ENCODE measurements at regions of chr14 and their contacts with region 1.

Region 1: GRCh38 chr14:92585981-92586937 is 72.7 kb downstream of the RIN3 start:
- DNase-seq: peak in 8 of 9 donors; percentile 46 to 78 (median 66)
- ATAC-seq: peak; percentile 80
- H3K4me3 ChIP-seq: peak overlapping the region; percentile 33
- H3K4me3 Mint-ChIP-seq: peak overlapping the region; percentile 67 to 87 (median 76)
- H3K27ac ChIP-seq: peak overlapping the region; percentile 70
- H3K27ac Mint-ChIP-seq: peak overlapping the region; percentile 90 to 98 (median 95)
- H3K4me1 ChIP-seq: peaks cover 89 to 90% of the 10 kb centered on the region in 2 donors
- H3K4me1 Mint-ChIP-seq: peaks cover 63 to 100% (median 96%) of the 10 kb centered on the region in 7 donors
- H3K27me3 ChIP-seq: no peaks in the 10 kb centered on the region
- H3K27me3 Mint-ChIP-seq: peaks cover 0 to 18% (median 0%) of the 10 kb centered on the region in 5 donors

Region 2: GRCh38 chr14:92513204-92513973 is 72.9 kb before region 1 on chr14 and contains the start of gene RIN3:
- CTCF ChIA-PET with region 1: no interaction called
- POLR2A ChIA-PET with region 1: interaction called, 3 read pairs
- intact Hi-C with region 1: loop called in 1 of 2 experiments (anchors 5 kb)
- DNase-seq: peak in 8 of 9 donors; percentile 17 to 43 (median 38)
- ATAC-seq: peak; percentile 71
- H3K4me3 ChIP-seq: peak within 1 kb of the TSS; percentile 76
- H3K4me3 Mint-ChIP-seq: peak within 1 kb of the TSS; percentile 48 to 86 (median 76)
- H3K27ac ChIP-seq: peak within 1 kb of the TSS; percentile 67
- H3K27ac Mint-ChIP-seq: peak within 1 kb of the TSS in 8 of 9 donors; percentile 14 to 71 (median 56)
- H3K4me1 ChIP-seq: peaks cover 25 to 44% of the 10 kb centered on the region in 2 donors
- H3K4me1 Mint-ChIP-seq: peaks cover 21 to 48% (median 34%) of the 10 kb centered on the region in 7 donors
- H3K27me3 ChIP-seq: no peaks in the 10 kb centered on the region
- H3K27me3 Mint-ChIP-seq: peaks cover 0 to 62% (median 0%) of the 10 kb centered on the region in 5 donors
- total RNA-seq, gene RIN3: 45.4 to 182 (median 132) TPM

Region 3: GRCh38 chr14:92551044-92551841 is 35.0 kb before region 1 on chr14:
- CTCF ChIA-PET with region 1: interaction called, 4 read pairs
- POLR2A ChIA-PET with region 1: interaction called, 10 read pairs
- intact Hi-C with region 1: loop called (anchors 2 to 5 kb)
- DNase-seq: no peak
- ATAC-seq: peak; percentile 59
- H3K4me3 ChIP-seq: no peak overlapping the region
- H3K4me3 Mint-ChIP-seq: no peak overlapping the region
- H3K27ac ChIP-seq: no peak overlapping the region
- H3K27ac Mint-ChIP-seq: peak overlapping the region in 3 of 9 donors; percentile 1 to 51 (median 50)
- H3K4me1 ChIP-seq: peaks cover 19 to 20% of the 10 kb centered on the region in 2 donors
- H3K4me1 Mint-ChIP-seq: peaks cover 27 to 54% (median 41%) of the 10 kb centered on the region in 7 donors
- H3K27me3 ChIP-seq: no peaks in the 10 kb centered on the region
- H3K27me3 Mint-ChIP-seq: peaks cover 0 to 10% (median 0%) of the 10 kb centered on the region in 5 donors

Region 4: GRCh38 chr14:92563359-92563758 is 22.9 kb before region 1 on chr14:
- CTCF ChIA-PET with region 1: no interaction called
- POLR2A ChIA-PET with region 1: interaction called, 8 read pairs
- intact Hi-C with region 1: loop called (anchors 1 kb)
- DNase-seq: no peak
- ATAC-seq: peak; percentile 66
- H3K4me3 ChIP-seq: no peak overlapping the region
- H3K4me3 Mint-ChIP-seq: peak overlapping the region in 1 of 10 donors; percentile 10
- H3K27ac ChIP-seq: no peak overlapping the region
- H3K27ac Mint-ChIP-seq: peak overlapping the region in 2 of 9 donors; percentile 21 to 68
- H3K4me1 ChIP-seq: peaks cover 5 to 9% of the 10 kb centered on the region in 2 donors
- H3K4me1 Mint-ChIP-seq: peaks cover 15 to 64% (median 38%) of the 10 kb centered on the region in 7 donors
- H3K27me3 ChIP-seq: no peaks in the 10 kb centered on the region
- H3K27me3 Mint-ChIP-seq: no peaks in the 10 kb centered on the region

Region 5: DNA sequence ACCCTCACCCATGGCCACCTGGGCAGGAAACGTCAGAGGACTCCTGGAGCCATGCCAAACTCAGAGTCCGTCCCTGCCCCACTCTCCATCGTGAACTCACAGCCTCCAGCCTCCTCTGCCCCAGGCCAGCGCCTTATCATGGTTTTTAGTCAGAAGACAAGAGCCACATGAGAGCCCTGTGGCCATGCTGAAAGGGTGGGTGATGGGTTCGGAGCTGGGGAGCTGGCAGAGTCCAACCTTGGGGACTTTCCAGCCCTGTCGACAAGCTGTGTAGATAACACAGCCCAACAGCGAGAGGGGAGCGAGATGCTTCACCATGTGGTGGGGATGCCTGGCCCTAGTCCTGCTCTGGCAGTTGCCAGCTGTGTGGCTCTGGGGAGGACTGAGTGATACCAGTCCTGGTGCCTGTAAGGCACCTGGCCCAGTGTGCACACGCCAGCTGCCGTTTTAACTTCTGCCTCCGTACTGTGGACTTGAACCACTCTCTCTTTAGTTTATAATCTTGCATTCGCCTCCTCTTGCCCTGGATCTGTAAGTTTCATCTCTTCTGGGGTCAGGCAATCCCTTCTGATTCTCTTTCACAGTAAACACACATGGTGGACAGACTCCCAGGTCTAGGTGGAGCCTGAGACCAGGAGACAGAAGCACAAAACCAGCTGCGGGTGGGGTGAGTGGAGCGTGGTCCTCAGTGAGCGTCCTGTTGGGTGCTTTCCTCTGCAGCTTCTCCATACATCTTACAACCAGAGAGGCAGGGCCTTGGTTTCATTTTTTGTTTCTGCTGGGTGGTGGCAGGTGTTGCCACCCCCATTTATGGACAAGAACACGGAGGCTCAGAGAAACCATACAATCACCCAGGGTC is 17.4 kb before region 1 on chr14:
- CTCF ChIA-PET with region 1: no interaction called
- POLR2A ChIA-PET with region 1: interaction called, 6 read pairs
- intact Hi-C with region 1: loop called in 1 of 2 experiments (anchors 2 kb)
- DNase-seq: peak in 2 of 9 donors; percentile 27 to 40
- ATAC-seq: peak; percentile 85
- H3K4me3 ChIP-seq: peak overlapping the region; percentile 29
- H3K4me3 Mint-ChIP-seq: peak overlapping the region; percentile 46 to 91 (median 76)
- H3K27ac ChIP-seq: peak overlapping the region; percentile 42
- H3K27ac Mint-ChIP-seq: peak overlapping the region; percentile 75 to 99 (median 94)
- H3K4me1 ChIP-seq: peaks cover 13 to 32% of the 10 kb centered on the region in 2 donors
- H3K4me1 Mint-ChIP-seq: peaks cover 20 to 54% (median 45%) of the 10 kb centered on the region in 7 donors
- H3K27me3 ChIP-seq: no peaks in the 10 kb centered on the region
- H3K27me3 Mint-ChIP-seq: peaks cover 0 to 23% (median 0%) of the 10 kb centered on the region in 5 donors

Region 6: DNA sequence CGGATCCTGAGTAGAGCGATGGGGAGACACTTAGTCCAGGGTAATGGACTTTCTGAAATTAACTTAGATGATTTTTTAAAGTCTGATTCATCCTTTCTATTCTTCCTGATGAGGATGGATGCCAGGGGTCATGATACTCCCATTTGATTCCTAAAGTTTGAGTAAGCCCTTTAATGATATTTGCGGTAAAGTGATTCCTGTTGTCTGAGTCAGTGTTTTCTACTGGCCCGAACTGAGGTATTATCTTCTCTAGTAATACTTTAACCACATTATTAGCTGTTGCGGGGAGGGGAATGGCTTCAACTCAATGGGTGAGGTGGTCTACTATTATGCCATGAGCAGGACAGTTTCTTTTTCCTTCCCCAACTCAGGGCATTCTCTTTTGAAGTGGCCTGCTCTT is 39.0 kb after region 1 on chr14:
- CTCF ChIA-PET with region 1: no interaction called
- POLR2A ChIA-PET with region 1: no interaction called
- intact Hi-C with region 1: no loop called
- DNase-seq: no peak
- ATAC-seq: no peak
- H3K4me3 ChIP-seq: no peak overlapping the region
- H3K4me3 Mint-ChIP-seq: no peak overlapping the region
- H3K27ac ChIP-seq: no peak overlapping the region
- H3K27ac Mint-ChIP-seq: no peak overlapping the region
- H3K4me1 ChIP-seq: no peaks in the 10 kb centered on the region
- H3K4me1 Mint-ChIP-seq: peaks cover 0 to 4% (median 0%) of the 10 kb centered on the region in 7 donors
- H3K27me3 ChIP-seq: no peaks in the 10 kb centered on the region
- H3K27me3 Mint-ChIP-seq: no peaks in the 10 kb centered on the region

Region 7: DNA sequence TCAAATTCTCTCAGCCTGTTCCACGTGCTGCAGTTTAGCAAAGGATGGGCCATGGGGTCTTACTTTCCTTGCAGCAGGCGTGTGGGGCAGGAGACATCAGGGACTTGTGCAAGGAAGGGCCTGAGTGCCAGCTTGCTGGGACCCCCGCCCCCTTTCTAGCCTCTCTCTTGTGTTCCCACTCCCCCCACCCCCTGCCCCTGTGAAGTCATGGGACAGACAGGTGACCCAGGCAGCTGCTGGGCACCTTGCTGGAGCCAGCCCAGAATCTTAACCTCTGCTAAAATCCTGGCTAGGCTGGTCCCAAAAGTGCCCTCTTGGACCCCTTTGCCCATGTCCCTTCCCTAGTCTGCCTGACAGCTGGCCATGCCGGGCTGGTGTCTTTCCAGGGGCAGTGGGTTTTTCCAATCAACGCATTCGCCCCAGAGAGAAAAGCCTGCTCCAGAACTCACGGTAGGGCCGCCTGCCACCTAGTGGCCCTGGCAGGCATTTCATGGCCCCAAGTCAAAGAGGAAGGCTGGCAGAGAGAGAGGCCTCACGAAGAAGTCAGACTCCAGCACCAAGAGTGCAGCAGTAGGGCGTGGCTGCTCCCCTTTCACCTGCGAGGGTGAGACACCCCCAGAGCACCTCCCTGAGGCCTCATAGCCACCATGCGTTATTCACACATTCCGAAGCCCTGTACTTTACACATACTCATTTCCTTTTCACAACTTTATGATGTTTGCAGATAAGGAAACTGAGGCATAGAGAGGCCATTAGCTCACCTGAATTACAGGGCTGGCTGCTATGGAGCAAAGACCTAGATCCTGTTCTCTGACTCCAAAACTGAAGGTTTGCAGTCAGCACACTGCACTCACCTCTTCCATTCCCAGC is 94.8 kb after region 1 on chr14:
- CTCF ChIA-PET with region 1: interaction called, 10 read pairs
- POLR2A ChIA-PET with region 1: no interaction called
- intact Hi-C with region 1: no loop called
- DNase-seq: peak; percentile 57 to 79 (median 73)
- ATAC-seq: peak; percentile 87
- H3K4me3 ChIP-seq: no peak overlapping the region
- H3K4me3 Mint-ChIP-seq: peak overlapping the region in 4 of 10 donors; percentile 8 to 36 (median 27)
- H3K27ac ChIP-seq: peak overlapping the region; percentile 63
- H3K27ac Mint-ChIP-seq: peak overlapping the region; percentile 34 to 95 (median 86)
- H3K4me1 ChIP-seq: peaks cover 19 to 24% of the 10 kb centered on the region in 2 donors
- H3K4me1 Mint-ChIP-seq: peaks cover 15 to 41% (median 26%) of the 10 kb centered on the region in 7 donors
- H3K27me3 ChIP-seq: no peaks in the 10 kb centered on the region
- H3K27me3 Mint-ChIP-seq: no peaks in the 10 kb centered on the region

Measured in naive thymus-derived CD4-positive, alpha-beta T cell (primary cell).